ENCODE measurements at regions of chr4 and their contacts with region 1.

Region 1: DNA sequence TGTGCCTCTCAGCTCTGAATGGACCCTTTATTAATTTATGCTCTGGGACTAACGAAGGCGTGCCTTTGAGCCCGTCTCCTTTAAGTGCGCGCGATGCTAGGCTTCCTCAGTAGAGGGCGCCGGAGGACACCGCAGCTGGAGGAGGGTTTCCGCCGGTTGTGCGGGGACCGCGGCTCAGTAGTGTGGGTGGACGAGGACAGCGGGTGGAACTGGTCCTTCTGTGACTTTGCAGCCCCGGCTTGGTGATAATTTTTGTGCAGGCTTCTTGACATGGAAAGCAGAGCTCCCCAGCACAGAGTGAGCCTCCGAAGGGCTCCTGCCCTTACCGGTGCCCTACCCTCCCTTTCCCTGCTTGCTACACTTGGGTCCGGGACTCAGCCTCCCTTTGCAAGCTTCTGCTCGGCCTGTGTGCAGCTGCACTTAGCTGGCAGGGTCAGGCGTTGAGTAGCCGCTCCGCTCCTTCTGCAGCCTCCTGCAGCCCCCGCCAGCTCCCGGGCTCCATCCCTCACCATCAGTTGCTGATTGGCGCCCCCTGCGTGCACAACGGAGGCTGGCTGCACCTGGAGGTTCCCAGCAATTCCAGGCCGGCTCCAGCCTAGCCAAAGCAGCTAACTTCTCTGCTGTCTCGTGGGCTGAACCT is 26.8 kb upstream of the BOD1L1 start:
- DNase-seq: peak; percentile 80
- ATAC-seq: peak; percentile 91
- H3K4me3 ChIP-seq: peak overlapping the region; percentile 47 to 60 (median 57)
- H3K4me3 Mint-ChIP-seq: peak overlapping the region; percentile 92
- H3K27ac ChIP-seq: no peak overlapping the region
- H3K27ac Mint-ChIP-seq: no peak overlapping the region
- H3K4me1 ChIP-seq: peaks cover 5 to 14% of the 10 kb centered on the region in 2 donors
- H3K4me1 Mint-ChIP-seq: peaks cover 14% of the 10 kb centered on the region
- H3K27me3 ChIP-seq: peaks cover 0 to 8% (median 0%) of the 10 kb centered on the region in 4 experiments
- H3K27me3 Mint-ChIP-seq: peaks cover 11% of the 10 kb centered on the region
- CTCF ChIP-seq: peak; percentile 88

Region 2: GRCh38 chr4:13627606-13628301 is 26.5 kb before region 1 on chr4 and contains the start of gene BOD1L1:
- CTCF ChIA-PET with region 1: interaction called, 16 read pairs
- POLR2A ChIA-PET with region 1: no interaction called
- intact Hi-C with region 1: loop called (anchors 2 kb)
- DNase-seq: peak; percentile 94
- ATAC-seq: peak; percentile 89
- H3K4me3 ChIP-seq: peak within 1 kb of the TSS; percentile 76 to 99 (median 88)
- H3K4me3 Mint-ChIP-seq: peak within 1 kb of the TSS; percentile 92
- H3K27ac ChIP-seq: peak within 1 kb of the TSS; percentile 97 to 98
- H3K27ac Mint-ChIP-seq: peak within 1 kb of the TSS; percentile 95
- H3K4me1 ChIP-seq: peaks cover 34% of the 10 kb centered on the region in 2 donors
- H3K4me1 Mint-ChIP-seq: peaks cover 52% of the 10 kb centered on the region
- H3K27me3 ChIP-seq: no peaks in the 10 kb centered on the region
- H3K27me3 Mint-ChIP-seq: no peaks in the 10 kb centered on the region
- CTCF ChIP-seq: peak; percentile 54
- total RNA-seq, gene BOD1L1: 107 and 109 TPM in 2 replicates

Region 3: GRCh38 chr4:14254252-14254651 is 600.0 kb after region 1 on chr4:
- CTCF ChIA-PET with region 1: interaction called, 5 read pairs
- POLR2A ChIA-PET with region 1: no interaction called
- intact Hi-C with region 1: loop called (anchors 5 kb)
- DNase-seq: peak; percentile 31
- ATAC-seq: peak; percentile 45
- H3K4me3 ChIP-seq: no peak overlapping the region
- H3K4me3 Mint-ChIP-seq: no peak overlapping the region
- H3K27ac ChIP-seq: no peak overlapping the region
- H3K27ac Mint-ChIP-seq: no peak overlapping the region
- H3K4me1 ChIP-seq: no peaks in the 10 kb centered on the region
- H3K4me1 Mint-ChIP-seq: no peaks in the 10 kb centered on the region
- H3K27me3 ChIP-seq: no peaks in the 10 kb centered on the region
- H3K27me3 Mint-ChIP-seq: no peaks in the 10 kb centered on the region
- CTCF ChIP-seq: peak; percentile 61

Region 4: GRCh38 chr4:14787894-14788293 is 1133.6 kb after region 1 on chr4:
- CTCF ChIA-PET with region 1: interaction called, 36 read pairs
- POLR2A ChIA-PET with region 1: no interaction called
- intact Hi-C with region 1: loop called (anchors 1 kb)
- DNase-seq: peak; percentile 33
- ATAC-seq: peak; percentile 65
- H3K4me3 ChIP-seq: no peak overlapping the region
- H3K4me3 Mint-ChIP-seq: no peak overlapping the region
- H3K27ac ChIP-seq: no peak overlapping the region
- H3K27ac Mint-ChIP-seq: no peak overlapping the region
- H3K4me1 ChIP-seq: no peaks in the 10 kb centered on the region
- H3K4me1 Mint-ChIP-seq: no peaks in the 10 kb centered on the region
- H3K27me3 ChIP-seq: peaks cover 0 to 3% (median 0%) of the 10 kb centered on the region in 4 experiments
- H3K27me3 Mint-ChIP-seq: peaks cover 11% of the 10 kb centered on the region
- CTCF ChIP-seq: peak; percentile 57

Region 5: DNA sequence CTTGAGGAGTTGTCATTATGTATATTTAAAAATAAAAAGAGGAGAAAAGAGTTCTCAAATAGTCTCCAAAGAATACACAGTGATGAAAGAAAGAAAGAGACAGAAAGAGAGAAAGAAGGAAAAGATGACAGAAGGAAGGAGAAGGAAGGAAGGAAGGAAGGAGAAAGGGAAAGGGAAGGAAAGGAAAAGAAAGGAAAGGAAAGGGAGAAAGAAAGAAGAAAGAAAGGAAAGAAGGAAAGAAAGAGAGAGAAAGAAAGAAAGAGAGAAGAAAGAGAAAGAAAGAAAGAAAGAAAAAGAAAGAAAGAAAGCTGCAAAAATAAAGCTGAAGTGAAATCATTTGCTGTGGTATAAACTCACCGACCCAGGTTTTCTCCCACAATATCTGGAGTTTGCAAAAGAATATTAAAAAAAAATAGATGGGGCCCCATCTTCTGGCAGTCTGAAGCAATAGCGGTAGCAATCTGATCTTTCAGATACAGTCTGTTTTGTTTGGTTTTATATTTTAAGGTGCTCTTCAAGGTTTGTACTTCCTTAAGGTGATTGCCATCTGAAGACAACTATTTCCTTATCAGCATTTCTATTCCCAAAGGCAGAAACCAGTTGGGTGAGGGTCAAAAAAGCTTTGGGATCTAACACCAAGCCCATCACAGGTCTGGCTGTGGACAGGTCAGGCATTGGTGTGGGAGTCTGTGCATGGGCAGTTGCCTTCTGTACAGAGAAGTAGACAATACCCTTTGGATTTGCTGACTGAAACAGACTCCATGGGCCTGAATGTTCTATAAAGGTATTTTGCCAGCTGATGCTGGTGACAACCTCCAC is 1508.4 kb after region 1 on chr4:
- CTCF ChIA-PET with region 1: interaction called, 13 read pairs
- POLR2A ChIA-PET with region 1: no interaction called
- intact Hi-C with region 1: loop called (anchors 2 kb)
- DNase-seq: no peak
- ATAC-seq: no peak
- H3K4me3 ChIP-seq: no peak overlapping the region
- H3K4me3 Mint-ChIP-seq: no peak overlapping the region
- H3K27ac ChIP-seq: no peak overlapping the region
- H3K27ac Mint-ChIP-seq: no peak overlapping the region
- H3K4me1 ChIP-seq: no peaks in the 10 kb centered on the region
- H3K4me1 Mint-ChIP-seq: no peaks in the 10 kb centered on the region
- H3K27me3 ChIP-seq: peaks cover 0 to 6% (median 1%) of the 10 kb centered on the region in 4 experiments
- H3K27me3 Mint-ChIP-seq: peaks cover 6% of the 10 kb centered on the region
- CTCF ChIP-seq: peak; percentile 43

Region 6: DNA sequence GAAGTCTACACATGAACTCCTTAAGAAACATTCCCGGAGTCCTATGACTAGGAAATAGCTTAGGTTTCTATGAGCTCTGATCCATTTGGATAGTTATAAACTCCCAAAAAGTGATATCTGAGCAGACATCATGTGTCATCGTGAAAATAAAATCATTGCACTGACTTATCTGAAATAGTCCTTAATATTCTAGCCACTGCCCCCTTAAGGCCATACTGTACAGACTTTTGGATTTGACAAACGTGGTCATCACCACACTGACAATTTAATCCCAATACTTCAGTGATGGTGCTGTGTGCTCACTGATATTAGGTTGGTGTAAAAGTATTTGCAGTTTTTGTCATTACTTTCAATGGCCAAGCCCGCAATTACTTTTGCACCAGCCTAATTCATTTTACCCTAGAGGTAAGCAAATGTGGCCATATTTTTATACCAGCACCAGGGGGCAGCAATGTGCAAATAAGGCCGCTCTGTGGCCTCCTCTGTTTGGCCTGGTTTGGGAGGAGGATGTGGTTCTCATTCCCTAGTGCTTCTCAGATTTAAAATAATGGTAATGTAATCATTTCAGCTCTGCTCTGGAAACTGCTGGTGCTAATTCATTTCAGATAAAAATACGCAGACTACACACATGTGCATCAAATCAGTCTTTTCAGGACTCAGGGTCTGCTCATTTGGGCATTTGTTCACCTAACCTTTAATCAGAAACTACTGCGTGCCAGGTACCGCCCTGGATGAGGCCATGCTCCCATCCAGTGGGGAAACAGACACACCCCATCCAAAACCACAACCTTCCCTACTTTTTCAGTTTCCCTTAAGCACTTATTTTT is 1577.2 kb after region 1 on chr4:
- CTCF ChIA-PET with region 1: no interaction called
- POLR2A ChIA-PET with region 1: no interaction called
- intact Hi-C with region 1: loop called (anchors 10 kb)
- DNase-seq: peak; percentile 79
- ATAC-seq: peak; percentile 79
- H3K4me3 ChIP-seq: no peak overlapping the region
- H3K4me3 Mint-ChIP-seq: no peak overlapping the region
- H3K27ac ChIP-seq: no peak overlapping the region
- H3K27ac Mint-ChIP-seq: no peak overlapping the region
- H3K4me1 ChIP-seq: peaks cover 13 to 16% of the 10 kb centered on the region in 2 donors
- H3K4me1 Mint-ChIP-seq: peaks cover 25% of the 10 kb centered on the region
- H3K27me3 ChIP-seq: no peaks in the 10 kb centered on the region
- H3K27me3 Mint-ChIP-seq: peaks cover 3% of the 10 kb centered on the region
- CTCF ChIP-seq: peak; percentile 79

Region 7: GRCh38 chr4:15649914-15650545 is 1995.8 kb after region 1 on chr4:
- CTCF ChIA-PET with region 1: no interaction called
- POLR2A ChIA-PET with region 1: no interaction called
- intact Hi-C with region 1: loop called (anchors 1 kb)
- DNase-seq: peak; percentile 78
- ATAC-seq: peak; percentile 54
- H3K4me3 ChIP-seq: no peak overlapping the region
- H3K4me3 Mint-ChIP-seq: no peak overlapping the region
- H3K27ac ChIP-seq: no peak overlapping the region
- H3K27ac Mint-ChIP-seq: no peak overlapping the region
- H3K4me1 ChIP-seq: peaks cover 22 to 42% of the 10 kb centered on the region in 2 donors
- H3K4me1 Mint-ChIP-seq: peaks cover 50% of the 10 kb centered on the region
- H3K27me3 ChIP-seq: no peaks in the 10 kb centered on the region
- H3K27me3 Mint-ChIP-seq: no peaks in the 10 kb centered on the region
- CTCF ChIP-seq: peak; percentile 77